Activated T-helper 2 cell treated with anti-CD3 and anti-CD28 coated beads, Interferon-gamma antibody, Interleukin-2, Interleukin-4, amounts not matched to agents 10 μg/mL and 5 μg/mL and 100 μg/mL, durations not matched to agents 14 hours and 24 hours and 36 hours (primary cell): ENCODE measurements at regions of chr5 and their contacts with region 1.

Region 1: DNA sequence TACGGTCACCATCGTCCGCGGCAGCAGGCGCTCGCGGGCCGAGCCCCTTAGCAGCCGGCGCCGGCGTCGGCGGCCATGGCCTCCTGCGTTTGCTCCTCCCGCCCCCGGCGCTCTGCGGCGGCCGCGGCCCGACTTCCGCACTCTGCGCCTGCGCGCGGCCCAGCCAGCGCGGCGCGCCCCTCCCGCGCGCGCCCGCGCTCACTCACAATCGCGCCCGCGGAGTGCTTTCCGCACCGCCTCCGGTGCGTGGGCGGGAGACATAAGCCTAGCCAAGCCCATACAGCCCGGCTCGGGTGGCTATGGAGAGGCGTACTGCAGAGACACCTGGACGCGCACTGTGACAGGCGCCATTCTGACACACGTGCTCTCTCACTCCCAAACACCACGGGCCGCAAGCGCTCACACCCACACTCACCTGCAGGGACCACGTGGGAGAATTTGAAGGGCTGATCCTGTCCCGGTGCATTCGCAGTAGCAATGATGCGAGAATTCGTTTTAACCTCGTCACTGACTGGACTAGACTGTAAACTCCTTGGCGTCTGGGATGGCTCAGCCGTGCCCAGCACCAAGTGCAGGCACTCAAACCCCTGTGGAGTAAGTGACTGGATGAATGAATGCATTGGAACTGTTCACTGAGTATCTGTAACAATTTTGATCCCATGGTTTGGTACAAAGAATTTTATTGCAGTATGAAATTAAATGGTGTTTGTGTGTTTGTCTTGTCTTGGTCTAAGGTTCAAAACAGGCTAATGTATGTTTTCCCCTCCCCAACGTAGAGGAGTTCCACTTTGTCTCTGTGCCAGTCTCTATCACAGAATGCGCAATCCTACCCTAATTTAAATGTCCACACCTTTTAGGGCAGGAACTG is at the start of gene RNF145:
- DNase-seq: peak; percentile 86
- H3K4me3 Mint-ChIP-seq: peak within 1 kb of the TSS; percentile 91
- H3K27ac Mint-ChIP-seq: peak within 1 kb of the TSS; percentile 97
- H3K4me1 Mint-ChIP-seq: peaks cover 50% of the 10 kb centered on the region
- H3K27me3 Mint-ChIP-seq: peaks cover 7% of the 10 kb centered on the region
- total RNA-seq, gene RNF145: 113 and 124 TPM in 2 replicates

Region 2: DNA sequence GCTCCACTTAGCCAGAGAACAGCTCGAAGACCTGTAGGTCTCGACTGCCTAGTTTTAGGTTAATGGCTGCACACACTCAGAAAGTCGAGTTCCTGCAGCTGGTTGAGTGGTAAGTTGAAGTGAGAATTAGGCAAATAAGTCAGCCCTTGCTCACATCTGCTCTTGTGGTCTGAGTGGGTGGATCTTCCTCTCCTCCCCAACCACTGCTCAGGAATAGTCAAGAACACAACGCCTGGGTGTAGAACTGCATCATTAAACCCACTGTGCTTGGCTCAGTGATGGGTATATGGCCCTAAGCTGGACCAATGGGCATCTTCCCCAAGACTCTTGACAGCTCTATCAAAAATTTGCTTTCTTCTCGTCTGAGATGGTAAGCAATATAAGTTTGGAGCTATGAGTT is 1613.2 kb before region 1 on chr5:
- intact Hi-C with region 1: loop called (anchors 5 kb)
- DNase-seq: peak; percentile 49
- H3K4me3 Mint-ChIP-seq: no peak overlapping the region
- H3K27ac Mint-ChIP-seq: peak overlapping the region; percentile 21
- H3K4me1 Mint-ChIP-seq: peaks cover 90% of the 10 kb centered on the region
- H3K27me3 Mint-ChIP-seq: no peaks in the 10 kb centered on the region

Region 3: GRCh38 chr5:159133041-159133741 is 76.5 kb before region 1 on chr5:
- intact Hi-C with region 1: no loop called
- DNase-seq: no peak
- H3K4me3 Mint-ChIP-seq: no peak overlapping the region
- H3K27ac Mint-ChIP-seq: no peak overlapping the region
- H3K4me1 Mint-ChIP-seq: peaks cover 4% of the 10 kb centered on the region
- H3K27me3 Mint-ChIP-seq: peaks cover 24% of the 10 kb centered on the region

Region 4: GRCh38 chr5:159178978-159179377 is 30.7 kb before region 1 on chr5:
- intact Hi-C with region 1: loop called (anchors 1 kb)
- DNase-seq: no peak
- H3K4me3 Mint-ChIP-seq: peak overlapping the region; percentile 30
- H3K27ac Mint-ChIP-seq: peak overlapping the region; percentile 85
- H3K4me1 Mint-ChIP-seq: peaks cover 74% of the 10 kb centered on the region
- H3K27me3 Mint-ChIP-seq: no peaks in the 10 kb centered on the region

Region 5: DNA sequence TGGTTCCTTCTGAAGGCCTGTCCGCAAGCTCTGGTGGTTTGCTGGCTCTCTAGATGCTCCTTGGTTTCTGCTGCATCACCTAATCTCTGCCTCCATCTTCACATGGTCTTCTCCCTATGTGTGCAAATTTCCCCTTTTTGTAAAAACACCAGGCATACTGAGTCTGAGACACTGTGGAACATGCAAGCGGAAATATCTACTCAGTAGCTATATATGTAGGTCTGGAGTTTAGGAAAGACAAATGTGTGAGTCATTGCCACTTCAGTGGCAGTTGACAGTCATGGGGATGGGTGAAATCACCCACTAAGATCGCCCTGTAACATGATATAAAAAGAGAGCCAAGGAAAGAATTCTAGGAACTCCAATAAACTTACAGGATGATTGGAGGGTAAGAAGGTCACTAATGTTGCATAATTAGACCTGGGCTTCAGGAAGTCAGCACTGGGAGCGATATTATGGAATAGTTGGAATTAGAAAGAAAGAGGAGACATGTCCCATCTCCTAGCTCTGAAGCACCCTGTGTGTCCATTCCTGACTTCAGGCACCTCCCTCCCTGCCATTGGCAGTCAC is 30.7 kb after region 1 on chr5:
- intact Hi-C with region 1: loop called (anchors 1 kb)
- DNase-seq: no peak
- H3K4me3 Mint-ChIP-seq: no peak overlapping the region
- H3K27ac Mint-ChIP-seq: peak overlapping the region; percentile 6
- H3K4me1 Mint-ChIP-seq: peaks cover 25% of the 10 kb centered on the region
- H3K27me3 Mint-ChIP-seq: no peaks in the 10 kb centered on the region

Region 6: GRCh38 chr5:159412284-159413046 is 202.8 kb after region 1 on chr5:
- intact Hi-C with region 1: loop called (anchors 2 kb)
- DNase-seq: peak; percentile 79
- H3K4me3 Mint-ChIP-seq: no peak overlapping the region
- H3K27ac Mint-ChIP-seq: no peak overlapping the region
- H3K4me1 Mint-ChIP-seq: peaks cover 48% of the 10 kb centered on the region
- H3K27me3 Mint-ChIP-seq: peaks cover 32% of the 10 kb centered on the region

Region 7: DNA sequence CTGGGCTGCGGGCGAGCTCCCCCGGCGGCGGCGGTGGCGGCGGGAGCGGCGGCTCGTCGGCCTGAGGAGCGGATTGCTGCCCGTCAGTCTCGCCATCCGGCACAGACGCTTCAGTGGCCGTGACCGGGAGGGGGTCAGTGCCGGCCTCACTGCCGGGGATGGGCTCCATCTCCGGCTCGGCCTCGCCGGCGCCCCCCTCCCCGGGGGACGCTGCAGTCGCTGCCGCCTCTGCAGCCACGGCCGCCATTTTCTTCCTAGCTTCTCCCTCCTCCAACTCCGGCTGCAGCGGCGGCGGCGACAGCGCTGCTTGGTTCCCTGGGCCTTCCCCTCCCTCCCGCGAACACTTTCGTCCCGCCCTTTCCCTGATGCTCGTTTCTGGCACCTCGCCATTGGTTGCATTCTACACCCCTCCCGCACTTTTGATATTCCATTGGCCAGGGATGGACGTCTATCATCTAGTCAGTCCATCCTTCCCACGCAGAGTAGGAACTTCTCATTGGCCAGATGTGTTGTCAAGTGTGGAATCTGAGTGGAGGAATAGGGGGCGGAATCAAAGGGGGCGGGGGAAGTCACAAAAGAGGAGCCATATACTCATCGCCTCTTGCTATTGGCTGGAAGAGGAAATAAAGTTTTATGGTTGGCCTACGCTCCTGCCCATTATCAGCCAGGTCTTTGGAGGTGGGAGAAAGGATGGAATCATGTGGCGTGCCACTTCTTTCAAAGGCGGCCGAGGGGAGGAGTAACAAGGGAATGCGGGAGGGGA is 909.7 kb after region 1 on chr5 and contains the start of gene PWWP2A:
- intact Hi-C with region 1: loop called (anchors 5 kb)
- DNase-seq: peak; percentile 96
- H3K4me3 Mint-ChIP-seq: peak within 1 kb of the TSS; percentile 94
- H3K27ac Mint-ChIP-seq: peak within 1 kb of the TSS; percentile 94
- H3K4me1 Mint-ChIP-seq: peaks cover 13% of the 10 kb centered on the region
- H3K27me3 Mint-ChIP-seq: peaks cover 3% of the 10 kb centered on the region
- total RNA-seq, gene PWWP2A: 20.4 and 22.7 TPM in 2 replicates